A549 (cell line): ENCODE measurements at regions of chr6 and their contacts with region 1.

Region 1: GRCh38 chr6:166400181-166400580 is 17.4 kb upstream of the MPC1 start:
- DNase-seq: no peak
- ATAC-seq: peak in 1 of 2 experiments; percentile 24; a peak in 2 of 6 replicates
- H3K4me3 ChIP-seq: no peak overlapping the region
- H3K27ac ChIP-seq: no peak overlapping the region
- H3K4me1 ChIP-seq: no peaks in the 10 kb centered on the region
- CTCF ChIP-seq: no peak
- EP300 ChIP-seq: no peak
- POLR2A ChIP-seq: no peak
- RAD21 ChIP-seq: no peak

Region 2: GRCh38 chr6:166156942-166157341 is 243.2 kb before region 1 on chr6:
- CTCF ChIA-PET with region 1: interaction called, 22 read pairs
- POLR2A ChIA-PET with region 1: no interaction called
- DNase-seq: peak; percentile 17 to 23
- ATAC-seq: peak in 1 of 2 experiments; percentile 69; a peak in 3 of 6 replicates
- H3K4me3 ChIP-seq: no peak overlapping the region
- H3K27ac ChIP-seq: no peak overlapping the region
- H3K4me1 ChIP-seq: no peaks in the 10 kb centered on the region
- CTCF ChIP-seq: peak; percentile 48
- EP300 ChIP-seq: no peak
- POLR2A ChIP-seq: no peak
- RAD21 ChIP-seq: peak; percentile 55 to 61

Region 3: GRCh38 chr6:166275714-166276166 is 124.4 kb before region 1 on chr6:
- CTCF ChIA-PET with region 1: interaction called, 45 read pairs
- POLR2A ChIA-PET with region 1: no interaction called
- DNase-seq: peak; percentile 35 to 40
- ATAC-seq: peak; percentile 91 to 95
- H3K4me3 ChIP-seq: no peak overlapping the region
- H3K27ac ChIP-seq: no peak overlapping the region
- H3K4me1 ChIP-seq: no peaks in the 10 kb centered on the region
- CTCF ChIP-seq: peak; percentile 94
- EP300 ChIP-seq: no peak
- POLR2A ChIP-seq: no peak
- RAD21 ChIP-seq: peak; percentile 84 to 90

Region 4: DNA sequence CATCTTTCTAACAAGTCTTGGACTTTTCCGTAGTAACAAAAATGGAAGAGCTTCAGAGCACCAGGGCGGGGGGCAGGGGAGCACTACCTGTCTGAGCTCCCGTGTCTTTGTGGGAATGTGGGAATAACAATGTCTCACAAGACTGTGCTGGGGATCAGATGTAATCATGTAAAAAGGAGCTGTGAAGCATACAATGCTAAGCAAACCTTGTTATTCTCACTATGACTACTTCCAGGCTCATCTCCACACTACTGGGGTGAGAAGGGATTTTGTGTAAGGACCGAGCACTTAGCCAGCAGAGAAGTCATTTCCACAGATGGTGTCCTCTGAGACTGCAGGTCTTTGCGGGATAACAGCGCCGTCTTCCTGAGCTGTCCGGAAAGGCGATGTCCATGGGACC is 119.1 kb before region 1 on chr6:
- CTCF ChIA-PET with region 1: interaction called, 45 read pairs
- POLR2A ChIA-PET with region 1: no interaction called
- DNase-seq: no peak
- ATAC-seq: no peak
- H3K4me3 ChIP-seq: no peak overlapping the region
- H3K27ac ChIP-seq: no peak overlapping the region
- H3K4me1 ChIP-seq: no peaks in the 10 kb centered on the region
- CTCF ChIP-seq: no peak
- EP300 ChIP-seq: no peak
- POLR2A ChIP-seq: no peak
- RAD21 ChIP-seq: no peak

Region 5: DNA sequence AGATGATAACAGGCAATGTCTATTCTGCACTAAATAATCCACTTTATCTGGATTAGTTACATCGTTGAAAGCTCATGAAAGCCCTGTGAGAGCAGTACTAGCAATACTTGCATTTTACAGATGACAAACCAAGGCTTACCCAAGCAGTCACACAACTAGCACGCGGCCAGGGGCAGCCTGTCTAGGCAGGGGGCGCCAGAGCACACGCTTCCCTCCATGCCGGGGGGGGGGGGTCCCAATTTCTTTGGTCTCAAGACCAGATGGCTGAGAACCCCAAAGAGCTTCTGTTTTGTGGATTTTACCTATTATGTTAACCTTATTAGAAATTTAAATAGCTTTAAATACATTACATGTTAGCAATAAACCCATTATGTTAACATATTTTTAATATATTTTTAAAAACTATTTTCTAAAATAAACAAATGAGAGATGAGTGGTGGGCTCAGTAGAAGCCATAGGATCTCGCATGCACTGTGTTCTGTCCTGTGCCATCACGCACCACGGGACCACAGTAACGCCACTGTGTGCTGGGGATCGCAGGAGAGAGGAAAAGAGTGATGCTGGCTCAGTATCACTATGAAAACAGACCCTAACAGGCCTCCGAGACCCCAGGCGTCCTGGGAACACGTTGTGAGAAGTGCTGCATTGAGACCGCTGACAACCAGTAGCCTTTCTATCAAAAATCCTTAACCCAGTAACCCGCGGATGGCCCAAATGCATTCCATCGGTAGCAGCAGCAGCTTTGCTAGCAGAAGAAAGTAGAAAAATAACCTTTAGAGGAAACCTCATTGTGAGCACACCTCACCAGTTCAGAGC is 86.7 kb before region 1 on chr6:
- CTCF ChIA-PET with region 1: interaction called, 21 read pairs
- POLR2A ChIA-PET with region 1: no interaction called
- DNase-seq: peak; percentile 18 to 31
- ATAC-seq: peak; percentile 50 to 72; a peak in 4 of 6 replicates
- H3K4me3 ChIP-seq: no peak overlapping the region
- H3K27ac ChIP-seq: no peak overlapping the region
- H3K4me1 ChIP-seq: no peaks in the 10 kb centered on the region; the same call in 2 of the 3 replicates
- CTCF ChIP-seq: peak; percentile 40; the same call in 2 of the 3 replicates
- EP300 ChIP-seq: no peak
- POLR2A ChIP-seq: no peak
- RAD21 ChIP-seq: peak; percentile 38 to 45; a peak in 3 of 5 replicates

Region 6: DNA sequence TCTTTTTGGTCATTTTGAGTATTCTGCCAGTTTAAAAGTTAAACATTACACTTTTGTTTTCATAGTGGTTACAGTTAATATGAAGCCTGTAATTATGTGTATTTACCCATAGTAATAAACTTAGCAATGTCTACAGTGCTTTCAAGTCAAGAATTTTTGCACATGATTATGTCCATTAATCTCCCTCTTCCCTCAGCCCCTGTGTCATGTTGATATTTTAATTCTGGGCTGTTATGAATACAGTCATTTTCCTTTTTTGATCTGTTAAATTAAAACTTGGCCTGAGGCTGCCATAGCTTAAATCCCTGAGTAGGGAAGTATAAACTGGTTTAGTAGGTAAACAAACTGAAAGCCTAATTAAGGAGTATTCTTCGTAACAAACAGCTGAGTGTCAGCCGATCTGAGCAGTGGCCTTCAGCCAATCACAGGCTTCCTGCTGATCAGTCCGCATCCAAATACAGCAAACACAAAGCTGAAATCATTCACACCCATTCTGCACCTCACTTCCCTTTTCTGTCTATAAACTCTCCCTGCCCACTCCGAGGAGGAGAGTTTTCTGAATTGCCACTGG is 48.4 kb before region 1 on chr6:
- CTCF ChIA-PET with region 1: no interaction called
- POLR2A ChIA-PET with region 1: no interaction called
- DNase-seq: no peak
- ATAC-seq: no peak
- H3K4me3 ChIP-seq: no peak overlapping the region
- H3K27ac ChIP-seq: no peak overlapping the region
- H3K4me1 ChIP-seq: no peaks in the 10 kb centered on the region
- CTCF ChIP-seq: no peak
- EP300 ChIP-seq: no peak
- POLR2A ChIP-seq: no peak
- RAD21 ChIP-seq: no peak

Region 7: DNA sequence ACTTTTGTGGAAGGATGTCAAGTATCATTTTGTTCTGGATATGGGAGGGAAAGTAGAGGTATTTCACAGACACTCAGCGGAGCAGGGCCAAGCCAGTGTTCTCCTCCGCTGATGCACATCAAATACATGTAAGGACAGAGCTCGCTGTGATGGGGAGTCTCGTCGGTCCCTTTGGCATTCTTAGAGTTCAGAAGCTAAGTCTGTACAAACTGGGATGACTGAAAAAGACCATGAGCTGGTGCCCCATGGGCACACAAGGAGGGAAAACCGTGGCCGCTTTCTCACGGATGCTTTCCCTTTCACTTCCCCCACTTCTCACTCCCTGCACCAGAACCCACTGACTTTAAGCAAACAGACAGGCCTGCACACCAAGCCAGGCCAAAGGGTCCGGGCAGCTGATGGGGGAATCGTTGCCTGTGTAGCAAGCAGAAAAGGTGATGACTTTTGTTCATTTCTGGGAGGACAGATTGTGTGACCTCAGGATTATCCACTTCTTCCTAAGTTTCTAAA is 10.3 kb after region 1 on chr6:
- CTCF ChIA-PET with region 1: interaction called, 13 read pairs
- POLR2A ChIA-PET with region 1: no interaction called
- DNase-seq: no peak
- ATAC-seq: no peak
- H3K4me3 ChIP-seq: no peak overlapping the region
- H3K27ac ChIP-seq: no peak overlapping the region
- H3K4me1 ChIP-seq: no peaks in the 10 kb centered on the region
- CTCF ChIP-seq: no peak
- EP300 ChIP-seq: no peak
- POLR2A ChIP-seq: no peak
- RAD21 ChIP-seq: no peak